ENCODE measurements at regions of chr11 and their contacts with region 1.

Region 1: GRCh38 chr11:122271137-122271536 is 155.1 kb upstream of the BLID start:
- DNase-seq: no peak
- H3K4me3 ChIP-seq: no peak overlapping the region
- CTCF ChIP-seq: no peak
- POLR2A ChIP-seq: no peak

Region 2: GRCh38 chr11:122146475-122146874 is 124.7 kb before region 1 on chr11:
- intact Hi-C with region 1: no loop called
- DNase-seq: no peak
- H3K4me3 ChIP-seq: no peak overlapping the region
- CTCF ChIP-seq: no peak
- POLR2A ChIP-seq: no peak

Region 3: GRCh38 chr11:122293296-122294023 is 22.3 kb after region 1 on chr11:
- intact Hi-C with region 1: loop called (anchors 2 kb)
- DNase-seq: no peak
- H3K4me3 ChIP-seq: no peak overlapping the region
- CTCF ChIP-seq: no peak
- POLR2A ChIP-seq: no peak

Measured in lower leg skin (tissue), 4 donors.